ENCODE measurements at regions of chr19 and their contacts with region 1.

Region 1: DNA sequence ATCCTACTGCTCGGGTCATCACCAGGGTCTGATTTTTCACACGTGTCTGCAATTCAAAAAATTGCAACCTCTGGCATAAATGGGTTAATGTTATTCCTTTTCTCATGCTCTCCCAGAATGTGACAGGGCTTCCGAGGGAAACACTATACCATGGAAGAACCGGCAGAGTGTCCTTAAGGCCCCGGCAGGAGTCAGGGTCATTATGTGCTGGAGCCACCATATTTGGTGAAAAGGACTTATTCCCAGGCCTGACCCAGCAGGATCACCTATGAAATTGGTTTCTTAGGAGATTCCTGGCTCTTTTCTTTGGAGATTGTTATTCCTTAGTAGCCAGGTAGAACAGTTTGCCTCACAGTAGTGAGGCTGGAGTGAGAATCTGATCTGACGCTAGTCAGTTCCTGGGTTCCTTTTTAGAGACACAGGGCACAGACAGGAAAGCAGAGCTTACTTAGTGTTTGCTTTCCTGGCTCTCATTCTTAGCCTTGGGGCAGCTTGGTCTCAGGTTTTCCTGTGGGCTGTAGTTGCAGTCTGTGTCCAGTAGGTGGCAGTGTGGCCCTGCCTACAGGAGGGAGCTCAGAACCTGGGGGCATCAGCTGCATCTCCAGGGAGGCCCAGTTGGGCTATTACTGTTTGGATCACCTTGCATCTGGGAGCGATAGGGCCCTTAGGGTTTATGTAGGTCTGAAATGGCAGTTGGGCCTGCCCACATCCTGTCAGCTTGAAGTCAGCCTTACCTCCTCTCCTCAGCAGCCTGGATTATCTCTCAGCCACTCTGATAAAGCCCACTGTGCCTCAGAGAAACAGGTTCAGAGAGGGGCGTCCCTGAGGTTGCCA is 12.4 kb downstream of the SNRNP70 start:
- DNase-seq: peak; percentile 87
- H3K4me3 ChIP-seq: peak overlapping the region in 1 of 2 experiments; percentile 45; a peak in 1 of 4 replicates
- H3K27ac ChIP-seq: peak overlapping the region in 1 of 2 experiments; percentile 22; a peak in 1 of 4 replicates
- H3K4me1 ChIP-seq: no peaks in the 10 kb centered on the region
- H3K27me3 ChIP-seq: no peaks in the 10 kb centered on the region
- CTCF ChIP-seq: peak; percentile 99
- EP300 ChIP-seq: no peak
- RAD21 ChIP-seq: peak; percentile 83

Region 2: GRCh38 chr19:48950159-48950558 is 147.5 kb before region 1 on chr19:
- CTCF ChIA-PET with region 1: no interaction called
- POLR2A ChIA-PET with region 1: no interaction called
- DNase-seq: no peak
- H3K4me3 ChIP-seq: no peak overlapping the region
- H3K27ac ChIP-seq: no peak overlapping the region
- H3K4me1 ChIP-seq: no peaks in the 10 kb centered on the region
- H3K27me3 ChIP-seq: no peaks in the 10 kb centered on the region
- CTCF ChIP-seq: no peak
- EP300 ChIP-seq: no peak
- RAD21 ChIP-seq: no peak

Region 3: GRCh38 chr19:49073514-49074378 is 23.9 kb before region 1 on chr19:
- CTCF ChIA-PET with region 1: interaction called, 14 read pairs
- POLR2A ChIA-PET with region 1: no interaction called
- DNase-seq: peak; percentile 50
- H3K4me3 ChIP-seq: no peak overlapping the region
- H3K27ac ChIP-seq: no peak overlapping the region
- H3K4me1 ChIP-seq: no peaks in the 10 kb centered on the region; a peak in 1 of 4 replicates
- H3K27me3 ChIP-seq: peaks cover 8% of the 10 kb centered on the region; the same call in 1 of the 2 replicates
- CTCF ChIP-seq: peak; percentile 49
- EP300 ChIP-seq: no peak
- RAD21 ChIP-seq: no peak; the same call in 1 of the 2 replicates

Region 4: GRCh38 chr19:49118565-49119410 is 21.1 kb after region 1 on chr19 and contains the start of gene C19orf73:
- CTCF ChIA-PET with region 1: interaction called, 86 read pairs
- POLR2A ChIA-PET with region 1: no interaction called
- DNase-seq: peak; percentile 99
- H3K4me3 ChIP-seq: peak within 1 kb of the TSS; percentile 61 to 69
- H3K27ac ChIP-seq: peak within 1 kb of the TSS; percentile 82 to 93
- H3K4me1 ChIP-seq: peaks cover 5 to 21% of the 10 kb centered on the region in 2 experiments; a peak in 1 of 4 replicates
- H3K27me3 ChIP-seq: no peaks in the 10 kb centered on the region
- CTCF ChIP-seq: 0 out of 2 replicates have a peak, but pooled peaks have one; percentile 13
- EP300 ChIP-seq: no peak
- RAD21 ChIP-seq: no peak
- polyA plus RNA-seq, gene C19orf73: 2.6 and 3.0 TPM in 2 replicates

Region 5: GRCh38 chr19:49133621-49134454 is 36.2 kb after region 1 on chr19:
- CTCF ChIA-PET with region 1: interaction called, 19 read pairs
- POLR2A ChIA-PET with region 1: no interaction called
- DNase-seq: peak; percentile 78
- H3K4me3 ChIP-seq: no peak overlapping the region
- H3K27ac ChIP-seq: no peak overlapping the region
- H3K4me1 ChIP-seq: peaks cover 3% of the 10 kb centered on the region in 2 experiments; a peak in 2 of 4 replicates
- H3K27me3 ChIP-seq: no peaks in the 10 kb centered on the region
- CTCF ChIP-seq: no peak
- EP300 ChIP-seq: no peak
- RAD21 ChIP-seq: no peak

Region 6: GRCh38 chr19:49148784-49149651 is 51.3 kb after region 1 on chr19:
- CTCF ChIA-PET with region 1: interaction called, 87 read pairs
- POLR2A ChIA-PET with region 1: interaction called, 4 read pairs
- DNase-seq: peak; percentile 94
- H3K4me3 ChIP-seq: peak overlapping the region; percentile 91 to 96
- H3K27ac ChIP-seq: peak overlapping the region; percentile 68 to 87; a peak in 3 of 4 replicates
- H3K4me1 ChIP-seq: peaks cover 3 to 27% of the 10 kb centered on the region in 2 experiments; a peak in 2 of 4 replicates
- H3K27me3 ChIP-seq: no peaks in the 10 kb centered on the region
- CTCF ChIP-seq: no peak
- EP300 ChIP-seq: no peak
- RAD21 ChIP-seq: no peak

Region 7: DNA sequence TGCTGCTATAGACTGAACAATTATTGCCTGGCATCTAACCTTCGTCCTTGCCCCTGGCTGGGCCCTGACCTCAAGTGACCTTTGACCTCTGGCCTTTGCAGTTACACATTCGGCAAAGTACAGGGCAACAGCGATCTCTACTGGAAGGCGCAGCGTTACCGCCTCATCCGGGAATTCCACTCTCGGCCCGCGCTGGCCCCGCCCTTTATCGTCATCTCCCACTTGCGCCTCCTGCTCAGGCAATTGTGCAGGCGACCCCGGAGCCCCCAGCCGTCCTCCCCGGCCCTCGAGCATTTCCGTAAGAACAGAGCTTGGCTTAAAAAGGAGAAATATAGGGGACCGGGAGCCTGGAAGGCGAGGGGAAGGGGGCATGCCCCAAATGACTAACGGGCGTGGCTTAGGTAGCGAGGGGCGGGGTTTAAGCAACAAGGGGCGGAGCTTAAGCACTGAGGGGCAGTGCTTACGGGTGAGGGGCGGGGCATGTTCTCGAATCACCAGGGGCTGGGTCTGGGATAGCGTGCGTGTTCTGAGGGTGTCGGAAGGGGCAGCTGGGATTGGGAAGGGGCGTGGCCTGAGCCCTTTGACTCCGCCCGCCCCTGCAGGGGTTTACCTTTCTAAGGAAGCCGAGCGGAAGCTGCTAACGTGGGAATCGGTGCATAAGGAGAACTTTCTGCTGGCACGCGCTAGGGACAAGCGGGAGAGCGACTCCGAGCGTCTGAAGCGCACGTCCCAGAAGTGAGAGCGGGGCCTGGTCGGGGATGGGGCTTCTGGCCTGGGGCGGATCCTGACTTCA is 112.6 kb after region 1 on chr19:
- CTCF ChIA-PET with region 1: interaction called, 13 read pairs
- POLR2A ChIA-PET with region 1: no interaction called
- DNase-seq: peak; percentile 69
- H3K4me3 ChIP-seq: no peak overlapping the region; a peak in 1 of 4 replicates
- H3K27ac ChIP-seq: no peak overlapping the region
- H3K4me1 ChIP-seq: no peaks in the 10 kb centered on the region; a peak in 1 of 4 replicates
- H3K27me3 ChIP-seq: no peaks in the 10 kb centered on the region
- CTCF ChIP-seq: no peak
- EP300 ChIP-seq: no peak
- RAD21 ChIP-seq: no peak